ENCODE measurements at regions of chr9 and their contacts with region 1.

Region 1: DNA sequence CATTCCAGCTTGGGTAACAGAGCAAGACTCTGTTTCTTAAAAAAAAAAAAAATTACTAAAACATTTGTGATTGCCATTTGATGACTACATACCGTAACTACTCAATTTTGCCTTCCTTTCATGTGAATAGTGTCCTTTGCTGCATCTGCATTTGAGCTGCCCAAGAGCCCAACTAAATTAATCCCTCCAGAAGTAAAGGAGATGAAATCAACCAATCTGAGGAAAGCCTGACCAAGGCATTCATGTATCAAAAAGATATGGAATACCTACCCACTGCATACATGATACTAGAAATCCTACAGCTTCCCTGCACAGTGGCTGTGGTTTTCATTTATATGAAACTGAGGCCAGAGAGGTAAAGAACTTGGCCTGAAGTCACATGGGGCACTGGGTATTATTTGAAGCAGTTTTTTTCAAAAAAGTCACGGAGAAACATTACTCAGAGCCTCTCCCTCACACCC is 177.5 kb downstream of the AOPEP start:
- DNase-seq: peak; percentile 80
- H3K4me3 ChIP-seq: no peak overlapping the region
- H3K27me3 ChIP-seq: no peaks in the 10 kb centered on the region
- CTCF ChIP-seq: no peak

Region 2: GRCh38 chr9:95132406-95133324 is 228.7 kb after region 1 on chr9:
- CTCF ChIA-PET with region 1: no interaction called
- POLR2A ChIA-PET with region 1: interaction called, 10 read pairs
- DNase-seq: no peak
- H3K4me3 ChIP-seq: no peak overlapping the region
- H3K27me3 ChIP-seq: no peaks in the 10 kb centered on the region
- CTCF ChIP-seq: no peak

Measured in BJ (cell line).